PC-3 (cell line): ENCODE measurements at regions of chr4 and their contacts with region 1.

Region 1: GRCh38 chr4:26319467-26319948 is 1.3 kb upstream of the RBPJ start:
- DNase-seq: peak; percentile 98
- ATAC-seq: peak; percentile 71
- H3K4me3 ChIP-seq: peak overlapping the region; percentile 78
- H3K27ac ChIP-seq: peak overlapping the region; percentile 92
- H3K4me1 ChIP-seq: peaks cover 12% of the 10 kb centered on the region
- H3K27me3 ChIP-seq: no peaks in the 10 kb centered on the region
- CTCF ChIP-seq: no peak

Region 2: DNA sequence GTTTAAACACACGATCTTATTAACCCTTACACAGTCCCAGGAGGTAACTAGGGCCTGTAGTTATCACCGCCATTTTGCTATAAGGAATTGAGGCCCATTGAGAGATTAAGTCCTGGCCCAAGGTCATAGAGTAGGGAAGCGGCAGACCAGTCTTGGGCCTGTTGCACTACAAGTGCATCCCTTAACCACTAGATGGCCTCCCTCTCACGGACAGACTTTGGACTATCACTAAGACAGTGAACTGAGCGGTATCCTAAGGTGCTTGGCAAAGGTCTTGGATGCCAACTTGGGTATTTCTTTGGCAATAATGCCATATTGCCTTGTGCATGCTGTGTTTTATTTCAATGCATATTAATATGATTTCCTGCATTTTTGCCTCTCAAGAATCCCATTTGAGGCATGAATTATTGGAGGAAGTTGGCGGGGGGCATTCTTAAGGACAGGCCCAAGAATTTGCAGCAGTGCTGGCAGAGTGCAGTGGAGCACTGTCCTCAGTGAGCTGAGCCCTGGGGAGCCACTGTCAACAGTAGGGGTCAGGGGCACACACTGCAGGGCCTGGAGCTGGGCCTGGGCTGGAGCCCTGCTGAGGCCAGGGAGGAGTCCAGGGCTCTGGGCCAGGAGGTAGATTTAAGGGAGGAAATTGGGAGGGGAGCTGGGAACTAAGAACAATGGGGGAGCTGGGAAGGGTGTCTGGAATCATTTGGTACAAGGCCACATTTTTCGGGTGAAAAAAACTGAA is 258.1 kb before region 1 on chr4:
- CTCF ChIA-PET with region 1: no interaction called
- POLR2A ChIA-PET with region 1: no interaction called
- intact Hi-C with region 1: loop called (anchors 5 kb)
- DNase-seq: peak; percentile 77
- ATAC-seq: peak; percentile 99
- H3K4me3 ChIP-seq: no peak overlapping the region
- H3K27ac ChIP-seq: no peak overlapping the region
- H3K4me1 ChIP-seq: no peaks in the 10 kb centered on the region
- H3K27me3 ChIP-seq: no peaks in the 10 kb centered on the region
- CTCF ChIP-seq: peak; percentile 75

Region 3: GRCh38 chr4:26088433-26088928 is 231.0 kb before region 1 on chr4:
- CTCF ChIA-PET with region 1: no interaction called
- POLR2A ChIA-PET with region 1: no interaction called
- intact Hi-C with region 1: loop called (anchors 1 kb)
- DNase-seq: peak; percentile 93
- ATAC-seq: peak; percentile 81
- H3K4me3 ChIP-seq: no peak overlapping the region
- H3K27ac ChIP-seq: peak overlapping the region; percentile 82
- H3K4me1 ChIP-seq: peaks cover 42% of the 10 kb centered on the region
- H3K27me3 ChIP-seq: no peaks in the 10 kb centered on the region
- CTCF ChIP-seq: no peak

Region 4: GRCh38 chr4:26197018-26197779 is 122.3 kb before region 1 on chr4:
- CTCF ChIA-PET with region 1: interaction called, 6 read pairs
- POLR2A ChIA-PET with region 1: interaction called, 3 read pairs
- intact Hi-C with region 1: loop called (anchors 1 kb)
- DNase-seq: peak; percentile 96
- ATAC-seq: peak; percentile 94
- H3K4me3 ChIP-seq: no peak overlapping the region
- H3K27ac ChIP-seq: peak overlapping the region; percentile 34
- H3K4me1 ChIP-seq: peaks cover 25% of the 10 kb centered on the region
- H3K27me3 ChIP-seq: no peaks in the 10 kb centered on the region
- CTCF ChIP-seq: no peak

Region 5: DNA sequence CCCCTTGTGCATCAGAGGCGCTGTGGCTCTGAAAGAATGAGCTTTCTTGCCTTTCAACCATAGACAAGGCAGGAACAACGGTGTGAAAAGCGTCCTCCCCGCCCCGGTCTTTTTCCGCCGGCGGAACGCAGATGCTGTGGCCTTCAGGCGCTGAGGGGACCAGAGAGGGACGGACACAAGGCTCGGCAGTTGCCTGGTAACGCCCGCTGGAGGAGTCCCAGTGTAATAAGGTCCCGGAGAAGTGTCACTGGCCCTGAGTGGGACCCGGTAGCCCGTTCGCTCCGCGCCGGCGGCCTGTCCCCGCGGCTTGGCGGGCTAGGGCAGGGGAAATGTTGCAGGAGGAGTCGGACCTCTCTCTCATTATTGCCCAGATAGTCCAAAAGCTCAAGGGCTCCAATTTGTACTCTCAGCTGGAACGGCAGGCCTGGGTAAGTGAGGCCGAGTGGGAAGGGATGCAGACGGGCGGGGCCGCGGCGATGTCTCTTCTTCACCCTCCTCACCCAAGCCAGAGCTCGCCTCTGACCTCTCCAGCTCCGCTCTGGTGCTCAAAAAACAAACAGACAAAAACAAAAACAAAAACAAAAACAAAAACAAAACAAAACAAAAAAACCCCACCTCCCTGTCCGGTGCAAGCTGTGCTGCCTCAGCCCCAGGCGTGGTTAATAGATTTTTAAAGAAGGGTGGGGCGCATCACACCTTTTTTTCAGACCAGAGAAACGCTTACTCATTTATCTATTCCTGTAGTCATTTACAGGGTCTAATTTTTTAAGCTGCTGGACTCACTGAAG is 264.6 kb after region 1 on chr4 and contains the start of gene TBC1D19:
- CTCF ChIA-PET with region 1: no interaction called
- POLR2A ChIA-PET with region 1: interaction called, 13 read pairs
- intact Hi-C with region 1: no loop called
- DNase-seq: peak; percentile 84
- ATAC-seq: peak; percentile 98
- H3K4me3 ChIP-seq: peak within 1 kb of the TSS; percentile 86
- H3K27ac ChIP-seq: peak within 1 kb of the TSS; percentile 69
- H3K4me1 ChIP-seq: peaks cover 8% of the 10 kb centered on the region
- H3K27me3 ChIP-seq: no peaks in the 10 kb centered on the region
- CTCF ChIP-seq: no peak
- total RNA-seq, gene TBC1D19: 4.0 and 4.5 TPM in 2 replicates